Sigmoid colon (tissue), 7 donors: ENCODE measurements at regions of chr1 and their contacts with region 1.

Region 1: GRCh38 chr1:155859234-155859829 is at the start of gene SYT11:
- DNase-seq: peak; percentile 97
- H3K4me3 ChIP-seq: peak within 1 kb of the TSS; percentile 37 to 52 (median 48)
- H3K27ac ChIP-seq: peak within 1 kb of the TSS; percentile 86 to 95 (median 88)
- H3K4me1 ChIP-seq: peaks cover 0 to 34% (median 28%) of the 10 kb centered on the region in 4 donors
- H3K27me3 ChIP-seq: no peaks in the 10 kb centered on the region
- CTCF ChIP-seq: no peak
- EP300 ChIP-seq: no peak
- POLR2A ChIP-seq: no peak
- total RNA-seq, gene SYT11: 14.0 to 29.1 (median 21.3) TPM

Region 2: GRCh38 chr1:155267373-155267772 is 592.0 kb before region 1 on chr1:
- intact Hi-C with region 1: loop called (anchors 5 kb)
- DNase-seq: no peak
- H3K4me3 ChIP-seq: no peak overlapping the region
- H3K27ac ChIP-seq: no peak overlapping the region
- H3K4me1 ChIP-seq: peaks cover 0 to 24% (median 16%) of the 10 kb centered on the region in 4 donors
- H3K27me3 ChIP-seq: no peaks in the 10 kb centered on the region
- CTCF ChIP-seq: no peak
- EP300 ChIP-seq: no peak
- POLR2A ChIP-seq: no peak

Region 3: DNA sequence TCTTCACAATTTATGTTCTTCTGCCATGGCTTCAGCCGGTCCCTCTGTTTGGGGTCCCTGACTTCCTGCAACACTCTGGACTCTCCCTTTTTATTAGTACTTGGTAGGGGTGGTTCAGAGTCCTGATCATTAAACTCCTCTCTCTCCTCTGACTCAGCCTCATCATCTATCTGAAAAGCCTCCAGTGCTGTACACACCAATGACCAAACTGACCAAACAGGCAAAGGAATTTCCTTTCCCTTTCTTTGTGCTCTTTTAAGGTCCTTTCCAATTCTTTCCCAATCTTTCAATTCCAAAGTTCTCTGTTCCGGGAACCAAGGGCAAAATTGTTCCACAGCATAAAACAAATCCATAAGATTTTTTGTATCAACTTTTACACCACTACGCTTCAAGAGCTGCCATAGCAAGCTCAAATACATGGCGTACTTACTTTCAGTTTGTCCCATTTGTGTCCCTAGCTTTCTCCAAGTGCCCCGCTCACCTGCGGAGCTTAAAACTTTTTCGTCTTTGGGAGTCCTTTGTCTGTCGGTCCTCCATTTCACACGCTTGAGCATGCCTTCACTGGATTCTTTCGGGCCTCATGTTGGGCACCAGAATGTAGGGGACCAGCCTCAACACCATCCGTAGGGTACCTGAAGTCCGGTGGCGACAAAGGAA is 160.8 kb before region 1 on chr1:
- intact Hi-C with region 1: loop called (anchors 10 kb)
- DNase-seq: no peak
- H3K4me3 ChIP-seq: no peak overlapping the region
- H3K27ac ChIP-seq: no peak overlapping the region
- H3K4me1 ChIP-seq: peaks cover 0 to 9% (median 3%) of the 10 kb centered on the region in 4 donors
- H3K27me3 ChIP-seq: no peaks in the 10 kb centered on the region
- CTCF ChIP-seq: no peak
- EP300 ChIP-seq: no peak
- POLR2A ChIP-seq: no peak

Region 4: GRCh38 chr1:155801149-155801548 is 58.2 kb before region 1 on chr1:
- intact Hi-C with region 1: no loop called
- DNase-seq: no peak
- H3K4me3 ChIP-seq: no peak overlapping the region
- H3K27ac ChIP-seq: no peak overlapping the region
- H3K4me1 ChIP-seq: no peaks in the 10 kb centered on the region
- H3K27me3 ChIP-seq: no peaks in the 10 kb centered on the region
- CTCF ChIP-seq: no peak
- EP300 ChIP-seq: no peak
- POLR2A ChIP-seq: no peak

Region 5: DNA sequence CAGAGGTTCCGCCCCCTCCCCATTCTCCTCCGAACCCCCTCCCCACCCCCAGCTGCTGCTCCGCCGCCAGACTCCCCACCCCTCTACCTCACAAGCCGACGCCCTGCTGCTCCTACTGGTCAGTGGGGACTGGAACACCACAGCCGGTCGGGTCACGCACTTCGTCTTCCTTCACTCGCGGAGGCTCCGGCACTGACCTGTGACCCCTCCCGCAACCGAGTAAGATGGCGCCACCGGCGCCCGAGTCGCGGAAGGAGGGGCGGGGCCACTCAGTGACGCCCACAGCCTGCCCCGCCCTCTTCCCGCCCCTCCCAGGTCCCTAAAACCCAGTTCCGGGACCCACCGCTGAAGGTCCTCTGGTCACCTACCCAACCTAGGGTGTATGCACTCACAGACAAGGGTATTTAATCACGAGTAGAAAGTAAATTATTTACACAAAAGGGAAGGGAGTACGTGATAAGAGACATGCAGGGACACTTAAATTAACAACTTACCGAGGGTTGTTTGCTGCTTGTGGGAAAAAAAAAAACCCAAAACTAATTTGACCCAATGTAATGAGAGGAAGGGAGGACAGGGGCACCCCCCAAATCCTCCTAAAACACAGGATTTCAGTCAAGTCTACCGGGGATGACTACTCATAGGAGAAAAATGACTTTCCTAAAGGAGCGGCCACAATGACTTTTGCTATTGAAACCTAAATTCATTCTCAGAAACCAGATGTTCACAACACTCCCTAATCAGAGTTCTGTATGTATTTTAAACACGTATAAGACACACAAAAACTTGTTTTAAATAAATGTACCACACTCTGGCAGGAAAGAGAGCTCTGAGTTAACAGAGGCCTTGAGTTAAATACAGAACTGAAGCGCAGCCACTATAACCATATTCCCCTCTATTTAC is 52.1 kb after region 1 on chr1 and contains the start of gene RIT1:
- intact Hi-C with region 1: loop called (anchors 2 kb)
- DNase-seq: peak; percentile 95
- H3K4me3 ChIP-seq: peak within 1 kb of the TSS; percentile 67 to 88 (median 79)
- H3K27ac ChIP-seq: peak within 1 kb of the TSS; percentile 91 to 96 (median 92)
- H3K4me1 ChIP-seq: peaks cover 0 to 22% (median 18%) of the 10 kb centered on the region in 4 donors
- H3K27me3 ChIP-seq: no peaks in the 10 kb centered on the region
- CTCF ChIP-seq: peak in 3 of 4 experiments; percentile 18 to 31 (median 18)
- EP300 ChIP-seq: no peak
- POLR2A ChIP-seq: peak; percentile 36 to 50
- total RNA-seq, gene RIT1: 16.6 to 23.2 (median 20.7) TPM

Region 6: DNA sequence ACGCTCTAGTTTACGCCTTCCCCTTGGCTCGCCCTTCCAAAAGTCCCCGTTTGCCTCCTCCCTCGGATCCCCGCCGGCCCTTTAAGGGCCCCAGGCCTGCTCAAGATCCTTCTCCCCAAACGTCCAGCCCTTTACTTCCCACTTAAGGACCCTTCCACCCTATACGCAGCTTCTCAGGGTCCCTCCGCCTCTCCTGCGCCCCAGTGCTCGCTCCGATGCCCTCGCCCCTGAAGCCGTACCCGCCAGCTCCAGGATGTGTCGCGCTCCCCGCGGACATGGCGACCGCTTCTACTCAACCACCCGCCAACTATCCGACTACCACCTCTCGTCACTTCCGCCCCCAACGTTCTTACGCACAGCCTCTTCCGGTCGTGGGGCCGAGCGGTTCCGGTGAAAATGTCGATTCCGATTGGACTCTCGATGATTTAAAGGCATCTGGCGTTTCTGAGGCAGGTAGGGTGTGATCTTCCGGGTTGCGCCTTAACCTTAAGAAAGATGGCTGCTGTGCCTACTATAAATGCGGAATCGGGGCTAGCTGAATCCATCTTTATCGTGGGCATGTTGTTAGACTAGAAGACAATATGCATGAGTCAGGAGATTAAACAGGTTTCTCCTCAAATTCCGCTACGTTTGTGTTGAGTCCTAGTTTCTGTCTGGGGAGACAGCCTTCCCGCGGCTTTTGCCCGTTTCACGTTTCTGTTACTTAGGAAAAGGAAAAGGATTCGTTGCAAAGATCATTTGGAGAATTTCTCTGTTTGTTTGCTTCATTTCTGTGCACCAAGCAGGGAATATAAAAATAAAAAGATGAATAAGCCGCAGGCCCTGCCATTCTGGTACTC is 75.0 kb after region 1 on chr1 and contains the start of gene KHDC4:
- intact Hi-C with region 1: loop called (anchors 2 kb)
- DNase-seq: peak; percentile 99
- H3K4me3 ChIP-seq: peak within 1 kb of the TSS; percentile 73 to 87 (median 80)
- H3K27ac ChIP-seq: peak within 1 kb of the TSS; percentile 87 to 94 (median 89)
- H3K4me1 ChIP-seq: peaks cover 0 to 52% (median 47%) of the 10 kb centered on the region in 4 donors
- H3K27me3 ChIP-seq: no peaks in the 10 kb centered on the region
- CTCF ChIP-seq: peak in 1 of 4 experiments; percentile 11
- EP300 ChIP-seq: no peak
- POLR2A ChIP-seq: peak; percentile 98 to 99
- total RNA-seq, gene KHDC4: 33.5 to 67.6 (median 38.9) TPM

Region 7: GRCh38 chr1:155983191-155984024 is 124.1 kb after region 1 on chr1:
- intact Hi-C with region 1: loop called (anchors 2 kb)
- DNase-seq: peak; percentile 88
- H3K4me3 ChIP-seq: peak overlapping the region in 2 of 4 donors; percentile 12 to 18
- H3K27ac ChIP-seq: peak overlapping the region; percentile 62 to 98 (median 92)
- H3K4me1 ChIP-seq: peaks cover 0 to 48% (median 35%) of the 10 kb centered on the region in 4 donors
- H3K27me3 ChIP-seq: no peaks in the 10 kb centered on the region
- CTCF ChIP-seq: no peak
- EP300 ChIP-seq: no peak
- POLR2A ChIP-seq: no peak